ENCODE measurements at regions of chr17 and their contacts with region 1.

Region 1: GRCh38 chr17:9768381-9768934 is 22.9 kb downstream of the DHRS7C start:
- DNase-seq: no peak
- ATAC-seq: no peak
- H3K4me3 Mint-ChIP-seq: no peak overlapping the region
- H3K27ac Mint-ChIP-seq: no peak overlapping the region
- H3K4me1 Mint-ChIP-seq: no peaks in the 10 kb centered on the region
- H3K27me3 Mint-ChIP-seq: peaks cover 4% of the 10 kb centered on the region; the same call in 1 of the 2 replicates
- CTCF ChIP-seq: peak; percentile 67

Region 2: DNA sequence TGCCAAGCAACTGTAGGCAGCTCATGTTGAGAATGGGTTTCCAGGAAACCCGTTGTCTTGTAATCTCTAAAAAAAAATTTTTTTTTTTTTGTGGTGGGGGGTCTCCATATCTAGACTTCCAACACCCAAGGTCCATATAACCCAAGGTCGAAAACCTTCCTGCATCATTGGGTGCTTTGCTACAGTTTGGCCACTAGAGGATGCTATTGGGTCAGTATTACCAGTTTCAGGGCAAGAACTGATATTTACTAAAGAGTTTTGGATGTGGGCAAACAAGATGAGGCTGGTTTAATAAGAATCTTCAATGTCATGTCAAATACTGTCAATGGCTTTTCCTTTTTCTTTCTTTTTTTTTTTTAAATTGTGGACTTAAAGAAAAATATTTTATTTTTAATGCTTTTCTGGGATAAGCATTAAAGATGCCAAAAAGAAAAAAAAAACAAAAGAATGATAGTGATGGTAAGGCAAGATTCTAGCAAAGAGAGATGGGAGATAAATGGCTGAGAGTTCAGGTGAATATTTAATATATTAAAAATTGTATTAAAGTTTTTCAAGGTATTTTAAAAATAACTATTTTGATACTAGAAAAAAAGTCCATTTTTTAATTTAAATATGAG is 39.3 kb before region 1 on chr17:
- CTCF ChIA-PET with region 1: interaction called, 13 read pairs
- POLR2A ChIA-PET with region 1: no interaction called
- DNase-seq: no peak
- ATAC-seq: peak; percentile 32; the same call in 1 of the 2 replicates
- H3K4me3 Mint-ChIP-seq: no peak overlapping the region
- H3K27ac Mint-ChIP-seq: no peak overlapping the region
- H3K4me1 Mint-ChIP-seq: no peaks in the 10 kb centered on the region
- H3K27me3 Mint-ChIP-seq: peaks cover 5% of the 10 kb centered on the region; the same call in 1 of the 2 replicates
- CTCF ChIP-seq: peak; percentile 96

Region 3: DNA sequence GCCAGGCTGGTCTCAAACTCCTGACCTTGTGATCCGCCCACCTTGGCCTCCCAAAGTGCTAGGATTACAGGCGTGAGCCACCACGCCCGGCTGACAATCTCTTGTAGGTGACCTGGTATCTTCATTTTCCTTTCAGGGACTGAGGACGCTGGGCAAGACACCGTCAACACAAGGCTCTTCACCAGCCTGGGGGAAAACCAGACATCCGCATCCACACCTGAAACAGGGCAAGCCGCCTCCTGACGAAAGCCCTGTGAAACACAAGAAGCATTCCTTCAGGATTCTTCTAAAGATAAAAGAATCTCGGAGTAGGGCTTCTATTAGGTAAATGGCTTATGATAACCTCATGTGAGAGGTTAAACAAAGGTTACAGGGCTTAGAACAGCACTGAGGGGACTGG is 25.4 kb before region 1 on chr17:
- CTCF ChIA-PET with region 1: interaction called, 12 read pairs
- POLR2A ChIA-PET with region 1: no interaction called
- DNase-seq: no peak
- ATAC-seq: no peak
- H3K4me3 Mint-ChIP-seq: no peak overlapping the region
- H3K27ac Mint-ChIP-seq: no peak overlapping the region
- H3K4me1 Mint-ChIP-seq: no peaks in the 10 kb centered on the region
- H3K27me3 Mint-ChIP-seq: no peaks in the 10 kb centered on the region; the same call in 1 of the 2 replicates
- CTCF ChIP-seq: no peak

Region 4: DNA sequence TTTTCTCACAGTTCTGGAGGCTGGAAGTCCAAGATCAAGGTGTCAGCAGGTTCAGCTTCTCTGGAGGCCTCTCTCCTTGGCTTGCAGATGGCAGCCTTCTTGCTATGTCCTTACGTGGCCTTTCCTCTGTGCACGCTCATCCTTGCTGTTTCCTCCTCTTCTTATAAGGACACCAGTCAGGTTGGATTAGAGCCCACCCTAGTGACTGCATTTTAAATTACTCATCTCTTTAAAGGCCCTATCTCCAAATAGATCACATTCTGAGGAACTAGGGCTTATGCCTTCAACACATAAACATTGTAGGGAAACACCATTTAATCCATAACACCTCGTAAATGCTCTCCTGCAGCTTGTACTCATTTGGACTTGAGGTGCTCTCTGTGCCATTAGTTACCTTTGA is 13.4 kb before region 1 on chr17:
- CTCF ChIA-PET with region 1: interaction called, 17 read pairs
- POLR2A ChIA-PET with region 1: no interaction called
- DNase-seq: no peak
- ATAC-seq: no peak
- H3K4me3 Mint-ChIP-seq: no peak overlapping the region
- H3K27ac Mint-ChIP-seq: no peak overlapping the region
- H3K4me1 Mint-ChIP-seq: no peaks in the 10 kb centered on the region
- H3K27me3 Mint-ChIP-seq: no peaks in the 10 kb centered on the region
- CTCF ChIP-seq: no peak

Region 5: DNA sequence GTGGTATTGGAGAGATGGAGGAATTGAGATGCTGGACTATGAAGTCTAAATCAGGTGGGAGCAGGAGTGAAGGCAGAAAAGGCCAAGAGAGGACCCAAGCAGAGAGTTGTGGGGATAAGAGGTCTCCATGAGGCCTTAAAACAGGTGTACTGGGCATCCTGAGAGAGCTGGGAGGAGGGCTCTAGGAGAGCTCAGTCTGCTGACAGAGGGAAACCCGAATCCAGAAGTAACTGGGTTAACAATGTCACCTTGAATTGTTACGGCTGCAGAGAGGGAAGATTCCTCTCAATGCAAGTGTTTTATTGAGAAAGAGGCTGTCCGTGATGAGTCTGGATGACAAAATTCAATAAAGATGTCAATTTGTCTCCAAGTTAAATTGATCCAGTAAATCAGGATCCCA is 14.6 kb after region 1 on chr17:
- CTCF ChIA-PET with region 1: interaction called, 27 read pairs
- POLR2A ChIA-PET with region 1: no interaction called
- DNase-seq: no peak
- ATAC-seq: no peak
- H3K4me3 Mint-ChIP-seq: no peak overlapping the region
- H3K27ac Mint-ChIP-seq: no peak overlapping the region
- H3K4me1 Mint-ChIP-seq: no peaks in the 10 kb centered on the region
- H3K27me3 Mint-ChIP-seq: no peaks in the 10 kb centered on the region
- CTCF ChIP-seq: no peak

Region 6: DNA sequence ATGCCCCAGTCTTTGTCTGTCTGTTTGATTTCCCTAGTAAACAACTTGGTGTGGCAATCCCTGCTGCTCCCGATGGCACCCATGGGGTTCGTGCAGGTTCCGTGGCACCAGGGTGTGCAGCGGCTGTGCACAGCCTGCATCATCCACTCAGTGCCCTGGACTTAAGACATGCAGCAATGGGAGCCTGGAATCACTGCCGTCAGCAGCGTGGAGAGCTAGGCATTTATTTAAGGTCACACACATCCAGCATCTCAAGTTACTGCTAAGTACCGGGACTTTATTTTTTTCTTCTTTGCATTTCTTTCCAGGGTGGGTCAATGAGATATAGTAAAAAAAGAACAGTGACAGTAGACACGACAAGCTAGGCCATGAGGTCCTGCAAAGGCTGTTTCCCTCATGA is 20.1 kb after region 1 on chr17:
- CTCF ChIA-PET with region 1: interaction called, 27 read pairs
- POLR2A ChIA-PET with region 1: no interaction called
- DNase-seq: no peak
- ATAC-seq: no peak
- H3K4me3 Mint-ChIP-seq: no peak overlapping the region
- H3K27ac Mint-ChIP-seq: no peak overlapping the region
- H3K4me1 Mint-ChIP-seq: no peaks in the 10 kb centered on the region
- H3K27me3 Mint-ChIP-seq: no peaks in the 10 kb centered on the region
- CTCF ChIP-seq: no peak

Region 7: GRCh38 chr17:9824094-9824493 is 55.6 kb after region 1 on chr17:
- CTCF ChIA-PET with region 1: no interaction called
- POLR2A ChIA-PET with region 1: no interaction called
- DNase-seq: no peak
- ATAC-seq: peak; percentile 36; the same call in 1 of the 2 replicates
- H3K4me3 Mint-ChIP-seq: no peak overlapping the region
- H3K27ac Mint-ChIP-seq: no peak overlapping the region
- H3K4me1 Mint-ChIP-seq: peaks cover 4% of the 10 kb centered on the region
- H3K27me3 Mint-ChIP-seq: no peaks in the 10 kb centered on the region; the same call in 1 of the 2 replicates
- CTCF ChIP-seq: no peak